Mammary epithelial cell (primary cell): ENCODE measurements at regions of chr7 and their contacts with region 1.

Region 1: DNA sequence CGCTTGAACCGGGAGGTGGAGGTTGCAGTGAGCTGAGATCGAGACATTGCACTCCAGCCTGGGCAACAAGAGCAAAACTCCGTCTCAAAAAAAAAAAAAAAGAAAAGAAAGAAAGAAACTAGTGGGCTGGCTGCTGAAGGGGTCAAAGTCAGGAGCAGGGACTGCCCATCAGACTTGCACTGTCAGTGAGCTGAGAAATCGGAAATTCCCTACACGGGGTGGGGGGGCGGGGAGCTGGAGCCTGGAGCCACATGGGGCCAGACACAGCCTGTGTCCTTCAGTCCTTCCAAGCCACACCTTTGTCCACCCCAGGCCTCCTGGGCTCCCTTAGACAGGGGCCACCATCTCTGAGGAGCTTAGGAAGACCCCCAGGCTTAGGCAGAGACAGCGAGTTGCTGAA is 34.5 kb downstream of the SRRM3 start:
- DNase-seq: no peak
- H3K4me3 ChIP-seq: no peak overlapping the region
- H3K27ac ChIP-seq: no peak overlapping the region
- H3K4me1 ChIP-seq: peaks cover 3% of the 10 kb centered on the region
- H3K27me3 ChIP-seq: no peaks in the 10 kb centered on the region
- CTCF ChIP-seq: no peak

Region 2: GRCh38 chr7:76086070-76086469 is 150.2 kb before region 1 on chr7:
- CTCF ChIA-PET with region 1: no interaction called
- dilution Hi-C with region 1: no loop called
- in situ Hi-C with region 1: no loop called
- intact Hi-C with region 1: no loop called
- DNase-seq: peak; percentile 66
- H3K4me3 ChIP-seq: no peak overlapping the region
- H3K27ac ChIP-seq: peak overlapping the region; percentile 55
- H3K4me1 ChIP-seq: peaks cover 56% of the 10 kb centered on the region
- H3K27me3 ChIP-seq: no peaks in the 10 kb centered on the region
- CTCF ChIP-seq: no peak

Region 3: GRCh38 chr7:76209310-76209709 is 26.9 kb before region 1 on chr7:
- CTCF ChIA-PET with region 1: interaction called, 33 read pairs
- dilution Hi-C with region 1: loop called (anchors 5 kb)
- in situ Hi-C with region 1: no loop called
- intact Hi-C with region 1: no loop called
- DNase-seq: no peak
- H3K4me3 ChIP-seq: no peak overlapping the region
- H3K27ac ChIP-seq: no peak overlapping the region
- H3K4me1 ChIP-seq: no peaks in the 10 kb centered on the region
- H3K27me3 ChIP-seq: peaks cover 1% of the 10 kb centered on the region
- CTCF ChIP-seq: no peak

Region 4: GRCh38 chr7:76262683-76263402 is 26.6 kb after region 1 on chr7:
- CTCF ChIA-PET with region 1: no interaction called
- dilution Hi-C with region 1: no loop called
- in situ Hi-C with region 1: no loop called
- intact Hi-C with region 1: no loop called
- DNase-seq: peak; percentile 48
- H3K4me3 ChIP-seq: no peak overlapping the region
- H3K27ac ChIP-seq: no peak overlapping the region
- H3K4me1 ChIP-seq: peaks cover 5% of the 10 kb centered on the region
- H3K27me3 ChIP-seq: peaks cover 5% of the 10 kb centered on the region
- CTCF ChIP-seq: peak; percentile 79 to 90

Region 5: DNA sequence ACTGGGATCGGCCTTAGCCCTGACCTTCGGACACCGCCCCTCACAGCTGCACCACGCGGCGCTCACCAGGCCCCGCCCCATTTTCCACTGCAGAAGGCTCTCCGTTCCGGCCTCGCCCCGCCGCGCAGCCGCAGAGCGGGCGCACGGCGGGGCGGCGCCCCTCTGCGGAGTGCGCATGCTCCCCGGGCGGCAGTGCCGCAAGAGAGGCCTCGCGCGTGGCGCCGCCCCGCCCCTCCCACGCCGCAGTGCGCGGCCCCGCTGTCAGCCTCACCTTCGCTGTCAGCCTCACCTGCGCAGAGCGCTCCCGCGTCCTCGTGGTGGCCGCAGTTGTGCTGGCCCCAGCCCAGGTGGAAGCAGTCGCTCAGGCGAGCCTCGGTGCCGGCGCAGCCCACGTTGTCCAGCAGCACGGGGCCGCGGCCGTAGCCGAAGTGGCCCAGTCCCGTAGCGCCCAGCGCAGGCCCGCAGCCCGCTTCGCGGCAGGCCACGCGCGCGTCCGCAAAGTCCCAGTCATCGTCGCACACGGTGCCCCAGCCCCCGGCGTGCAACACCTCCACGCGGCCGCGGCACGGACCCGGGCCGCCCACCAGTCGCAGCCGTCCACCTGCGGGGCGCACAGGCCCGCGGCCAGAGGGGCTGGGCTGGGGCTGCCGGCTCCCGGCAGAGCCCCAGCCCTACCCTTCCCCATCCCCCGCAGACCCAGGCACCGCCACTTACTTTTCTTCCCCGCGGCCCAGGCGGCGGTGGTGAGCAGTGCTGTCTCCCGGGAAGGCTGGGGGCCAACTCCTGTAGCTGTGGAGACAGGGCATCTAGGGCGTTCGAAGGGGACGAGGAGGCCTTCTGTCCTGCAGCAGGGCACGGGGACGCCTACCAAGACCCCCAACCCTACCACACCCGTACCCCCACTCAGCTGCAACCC is 157.2 kb after region 1 on chr7:
- CTCF ChIA-PET with region 1: no interaction called
- dilution Hi-C with region 1: no loop called
- in situ Hi-C with region 1: no loop called
- intact Hi-C with region 1: no loop called
- DNase-seq: peak; percentile 81
- H3K4me3 ChIP-seq: peak overlapping the region; percentile 29 to 61 (median 54)
- H3K27ac ChIP-seq: peak overlapping the region; percentile 49
- H3K4me1 ChIP-seq: peaks cover 17% of the 10 kb centered on the region
- H3K27me3 ChIP-seq: no peaks in the 10 kb centered on the region
- CTCF ChIP-seq: no peak